ENCODE measurements at regions of chr21 and their contacts with region 1.

Region 1: DNA sequence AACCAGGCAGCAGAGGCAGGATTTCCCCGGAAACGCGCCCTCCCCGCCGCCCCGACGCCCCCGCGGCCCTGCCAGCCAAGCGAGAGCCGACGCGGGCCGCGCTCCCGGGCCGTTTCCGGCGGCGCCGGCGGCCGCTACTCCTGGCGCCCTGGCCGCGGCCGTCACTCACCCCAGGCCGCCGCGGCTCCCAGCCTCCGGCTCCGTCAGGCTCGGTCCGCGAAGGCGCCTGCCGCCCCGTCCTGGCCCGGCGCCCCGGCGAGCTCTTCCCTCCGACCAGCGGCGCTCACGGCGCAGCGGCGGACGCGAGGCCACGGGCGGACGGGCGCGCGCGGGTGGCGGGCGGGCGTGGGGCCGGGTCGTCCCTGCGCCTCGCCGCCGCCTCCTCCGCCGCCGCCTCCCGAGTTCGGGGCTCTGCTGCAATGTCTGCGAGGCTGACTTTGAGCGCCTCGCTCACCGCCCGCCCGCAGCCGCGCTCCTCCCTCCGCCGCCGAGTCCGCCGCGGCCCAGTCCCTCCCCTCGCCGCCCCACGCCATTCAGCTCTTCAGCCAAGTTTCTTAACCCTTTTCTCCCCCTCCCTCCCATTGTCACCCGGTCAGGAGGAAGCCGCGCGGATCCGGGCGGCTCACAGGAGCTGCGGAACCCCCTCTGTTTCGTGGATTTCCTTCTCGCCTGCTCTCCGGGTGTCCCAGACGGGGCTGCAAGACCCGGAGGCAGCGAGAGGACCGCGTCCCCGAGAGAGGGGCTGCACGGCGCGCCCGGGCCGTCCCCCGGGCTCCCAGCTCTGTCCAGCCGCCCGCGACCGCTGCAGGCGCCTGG is at the start of gene NRIP1:
- DNase-seq: peak; percentile 88 to 91
- H3K4me3 ChIP-seq: peak within 1 kb of the TSS; percentile 85
- H3K4me3 Mint-ChIP-seq: peak within 1 kb of the TSS; percentile 99
- H3K27ac Mint-ChIP-seq: peak within 1 kb of the TSS; percentile 96
- H3K4me1 ChIP-seq: peaks cover 22% of the 10 kb centered on the region
- H3K4me1 Mint-ChIP-seq: peaks cover 33% of the 10 kb centered on the region
- H3K27me3 ChIP-seq: no peaks in the 10 kb centered on the region
- H3K27me3 Mint-ChIP-seq: no peaks in the 10 kb centered on the region
- CTCF ChIP-seq: no peak
- total RNA-seq, gene NRIP1: 24.7 and 28.6 TPM in 2 replicates

Region 2: DNA sequence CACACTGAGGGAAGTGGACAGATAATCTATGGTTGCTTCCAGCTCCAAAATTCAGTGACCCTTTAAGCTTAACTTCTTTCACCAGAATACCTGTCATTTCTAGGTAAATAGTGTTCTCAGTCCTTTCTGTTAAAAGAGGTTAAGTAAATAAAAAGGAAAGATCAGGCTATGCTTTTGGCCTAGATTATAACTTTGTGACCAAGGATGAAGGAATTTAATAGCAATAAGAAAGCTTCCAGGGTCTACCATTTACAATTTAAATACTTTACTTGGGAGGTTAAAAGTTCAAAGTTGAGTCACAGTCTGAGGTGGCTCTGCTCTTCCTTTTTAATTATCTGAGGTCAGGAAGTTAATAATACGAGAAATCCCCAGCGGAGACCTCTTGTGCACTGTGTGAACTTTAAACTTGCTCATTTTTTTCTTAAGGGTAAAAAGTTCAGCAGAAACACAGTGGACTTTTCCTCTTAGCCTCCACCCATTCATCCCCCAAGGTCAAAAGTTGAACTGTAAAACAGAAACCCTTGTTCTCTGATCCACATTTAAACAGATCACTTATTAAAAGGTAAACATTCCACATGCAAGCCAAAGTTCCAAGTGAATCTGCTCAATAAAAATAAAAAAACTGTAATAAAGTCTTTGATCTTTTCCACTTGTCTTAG is 187.1 kb before region 1 on chr21:
- CTCF ChIA-PET with region 1: no interaction called
- POLR2A ChIA-PET with region 1: no interaction called
- intact Hi-C with region 1: loop called (anchors 5 kb)
- DNase-seq: peak; percentile 46 to 53
- H3K4me3 ChIP-seq: no peak overlapping the region
- H3K4me3 Mint-ChIP-seq: no peak overlapping the region
- H3K27ac Mint-ChIP-seq: peak overlapping the region; percentile 45
- H3K4me1 ChIP-seq: peaks cover 61% of the 10 kb centered on the region
- H3K4me1 Mint-ChIP-seq: peaks cover 56% of the 10 kb centered on the region
- H3K27me3 ChIP-seq: no peaks in the 10 kb centered on the region
- H3K27me3 Mint-ChIP-seq: no peaks in the 10 kb centered on the region
- CTCF ChIP-seq: no peak

Region 3: GRCh38 chr21:15132742-15133141 is 68.0 kb after region 1 on chr21:
- CTCF ChIA-PET with region 1: no interaction called
- POLR2A ChIA-PET with region 1: no interaction called
- intact Hi-C with region 1: no loop called
- DNase-seq: no peak
- H3K4me3 ChIP-seq: no peak overlapping the region
- H3K4me3 Mint-ChIP-seq: no peak overlapping the region
- H3K27ac Mint-ChIP-seq: no peak overlapping the region
- H3K4me1 ChIP-seq: peaks cover 10% of the 10 kb centered on the region; the same call in 1 of the 2 replicates
- H3K4me1 Mint-ChIP-seq: peaks cover 9% of the 10 kb centered on the region
- H3K27me3 ChIP-seq: no peaks in the 10 kb centered on the region
- H3K27me3 Mint-ChIP-seq: no peaks in the 10 kb centered on the region
- CTCF ChIP-seq: no peak

Region 4: DNA sequence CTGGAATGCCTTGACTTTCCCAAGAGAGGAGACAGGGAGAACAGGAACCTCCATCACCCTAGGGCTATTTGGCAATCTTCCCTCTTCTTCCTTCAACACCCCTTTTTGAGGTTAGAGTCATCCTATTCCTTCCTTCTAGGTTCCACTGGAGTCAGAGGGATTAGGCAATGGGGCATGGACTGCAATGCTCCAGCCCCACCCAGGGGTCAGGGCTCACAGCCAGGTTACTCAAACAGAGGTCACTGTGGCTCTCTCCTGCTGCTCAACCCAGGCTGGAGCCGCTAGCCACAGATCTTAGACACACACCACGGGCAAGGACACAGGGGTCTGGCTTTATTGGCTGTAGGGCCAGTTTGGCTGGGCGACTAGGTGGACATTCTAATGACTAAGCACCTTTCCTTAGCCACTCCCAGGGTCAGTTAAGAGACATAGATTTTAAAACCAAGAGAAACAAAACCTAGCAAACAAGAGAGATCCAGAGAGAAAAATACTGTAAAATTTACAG is 145.5 kb after region 1 on chr21:
- CTCF ChIA-PET with region 1: no interaction called
- POLR2A ChIA-PET with region 1: no interaction called
- intact Hi-C with region 1: loop called (anchors 5 kb)
- DNase-seq: peak; percentile 62 to 73
- H3K4me3 ChIP-seq: no peak overlapping the region
- H3K4me3 Mint-ChIP-seq: no peak overlapping the region
- H3K27ac Mint-ChIP-seq: no peak overlapping the region
- H3K4me1 ChIP-seq: peaks cover 23% of the 10 kb centered on the region
- H3K4me1 Mint-ChIP-seq: peaks cover 12% of the 10 kb centered on the region
- H3K27me3 ChIP-seq: no peaks in the 10 kb centered on the region
- H3K27me3 Mint-ChIP-seq: no peaks in the 10 kb centered on the region
- CTCF ChIP-seq: peak in 1 of 2 experiments; percentile 35

Region 5: DNA sequence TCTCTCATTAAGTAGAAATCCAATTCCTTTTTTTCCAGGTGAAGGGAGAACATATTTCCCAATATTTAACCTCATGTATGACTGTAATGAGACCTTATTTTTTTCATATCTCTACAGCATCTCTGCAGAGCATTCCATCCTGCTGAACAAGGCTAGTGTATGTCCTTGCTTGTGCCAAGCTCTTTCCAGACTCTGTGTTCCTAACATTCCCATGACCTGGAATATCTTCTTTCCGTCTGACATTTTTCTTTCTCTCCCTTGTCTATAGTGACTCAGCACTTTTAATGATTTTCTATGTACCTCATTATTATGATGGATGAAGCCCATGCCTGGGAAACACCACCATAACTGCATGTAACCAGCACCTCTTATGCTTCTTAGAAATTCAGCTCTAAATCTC is 278.3 kb after region 1 on chr21:
- CTCF ChIA-PET with region 1: no interaction called
- POLR2A ChIA-PET with region 1: no interaction called
- intact Hi-C with region 1: loop called (anchors 1 kb)
- DNase-seq: no peak
- H3K4me3 ChIP-seq: no peak overlapping the region
- H3K4me3 Mint-ChIP-seq: no peak overlapping the region
- H3K27ac Mint-ChIP-seq: no peak overlapping the region
- H3K4me1 ChIP-seq: no peaks in the 10 kb centered on the region
- H3K4me1 Mint-ChIP-seq: no peaks in the 10 kb centered on the region
- H3K27me3 ChIP-seq: no peaks in the 10 kb centered on the region
- H3K27me3 Mint-ChIP-seq: peaks cover 9% of the 10 kb centered on the region
- CTCF ChIP-seq: no peak